ENCODE measurements at regions of chr1 and their contacts with region 1.

Region 1: DNA sequence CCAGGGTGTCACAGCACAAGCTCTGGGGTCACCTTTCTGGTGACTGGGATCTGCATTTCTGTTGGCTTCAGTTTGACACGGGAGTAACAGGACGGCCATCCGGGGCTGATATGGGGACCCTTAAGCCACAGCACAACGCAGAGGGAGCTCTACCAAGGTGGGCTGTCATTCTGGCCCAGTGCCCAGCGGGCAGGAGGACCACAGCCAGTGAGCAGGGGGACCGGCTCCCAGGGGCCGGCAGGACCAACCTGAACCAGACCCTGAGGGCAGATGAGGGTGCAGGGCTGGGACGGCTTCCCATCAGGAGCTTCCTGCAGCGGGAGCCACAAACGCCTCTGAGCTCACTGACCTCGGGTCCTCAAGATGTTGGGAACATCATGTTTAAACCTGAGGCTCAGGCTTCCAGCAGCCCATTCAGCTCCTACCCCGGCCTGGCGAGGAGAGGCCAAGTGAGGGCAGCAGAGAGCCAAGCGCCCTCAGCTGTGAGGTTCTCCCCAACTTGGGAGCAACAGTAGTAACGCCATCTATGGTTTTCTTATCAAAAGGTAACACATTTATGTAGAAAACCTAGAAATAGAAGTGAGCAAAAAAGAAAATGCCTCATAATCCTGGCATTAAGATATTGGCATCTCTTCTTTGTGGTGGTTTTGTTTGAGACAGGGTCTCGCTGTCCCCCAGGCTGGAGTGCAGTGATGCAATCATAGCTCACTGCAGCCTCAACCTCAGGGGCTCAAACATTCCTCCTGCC is 26.8 kb downstream of the TMEM201 start:
- DNase-seq: no peak
- H3K4me3 ChIP-seq: no peak overlapping the region
- CTCF ChIP-seq: peak; percentile 81

Region 2: GRCh38 chr1:9593492-9594465 is 21.7 kb before region 1 on chr1:
- CTCF ChIA-PET with region 1: interaction called, 22 read pairs
- POLR2A ChIA-PET with region 1: no interaction called
- DNase-seq: peak; percentile 9
- H3K4me3 ChIP-seq: no peak overlapping the region
- CTCF ChIP-seq: no peak